Activated CD8-positive, alpha-beta T cell treated with anti-CD3 and anti-CD28 coated beads for 36 hours (primary cell): ENCODE measurements at regions of chr10 and their contacts with region 1.

Region 1: DNA sequence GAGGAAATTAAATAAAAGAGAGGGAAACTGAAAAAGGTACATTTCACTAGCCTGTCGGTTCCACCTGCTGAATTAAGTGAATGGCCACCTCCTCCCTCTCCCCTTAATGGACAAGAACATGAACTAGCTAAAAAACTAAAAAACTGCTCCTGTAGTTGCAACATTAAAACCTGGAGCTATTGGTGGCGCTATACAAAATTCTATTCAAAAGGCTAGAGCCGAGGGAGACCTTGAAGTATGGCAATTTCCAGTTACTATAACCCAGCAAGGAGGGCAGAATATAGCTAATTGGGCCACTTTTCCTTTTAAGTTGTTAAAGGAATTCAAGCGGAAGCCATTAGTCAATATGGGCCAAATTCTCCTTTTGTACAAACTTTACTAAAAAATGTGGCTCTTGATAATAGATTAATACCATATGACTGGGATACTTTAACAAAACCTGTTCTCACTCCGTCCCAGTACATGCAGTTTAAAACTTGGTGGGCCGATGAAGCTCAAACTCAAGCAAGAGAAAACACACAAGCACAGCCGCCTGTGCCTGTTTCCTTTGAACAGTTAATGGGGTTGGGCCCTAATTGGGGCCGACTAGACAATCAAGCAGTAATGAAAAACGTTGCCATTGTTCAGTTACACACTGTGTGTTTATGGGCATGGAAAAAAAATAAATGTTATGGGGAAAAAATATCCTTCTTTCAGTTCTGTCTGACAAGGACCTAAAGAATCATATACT is 6.5 kb upstream of the CHST3 start:
- DNase-seq: no peak
- ATAC-seq: no peak
- H3K4me3 Mint-ChIP-seq: no peak overlapping the region
- H3K27ac Mint-ChIP-seq: no peak overlapping the region
- H3K4me1 Mint-ChIP-seq: no peaks in the 10 kb centered on the region
- H3K27me3 Mint-ChIP-seq: peaks cover 12% of the 10 kb centered on the region
- CTCF ChIP-seq: no peak

Region 2: DNA sequence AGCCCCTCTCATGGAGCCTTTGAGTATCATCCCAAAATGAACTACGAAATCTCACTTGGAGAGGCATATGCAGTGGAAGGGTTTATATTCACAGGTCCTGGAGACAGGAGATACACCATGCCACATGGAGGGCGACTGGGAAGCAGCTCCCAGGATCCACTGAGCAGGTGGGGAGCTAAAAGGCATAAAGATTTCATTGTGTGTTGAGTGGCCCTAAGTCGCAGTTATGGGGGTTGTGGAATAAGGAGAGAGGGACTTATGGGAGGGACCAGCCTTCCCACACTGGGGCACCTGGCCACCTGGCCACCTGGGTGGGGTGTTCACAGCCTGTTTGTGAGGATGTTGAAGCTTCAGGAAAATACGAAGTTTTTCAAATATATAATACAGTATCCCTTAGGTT is 30.6 kb before region 1 on chr10:
- CTCF ChIA-PET with region 1: no interaction called
- POLR2A ChIA-PET with region 1: no interaction called
- intact Hi-C with region 1: no loop called
- DNase-seq: no peak
- ATAC-seq: no peak
- H3K4me3 Mint-ChIP-seq: no peak overlapping the region
- H3K27ac Mint-ChIP-seq: no peak overlapping the region
- H3K4me1 Mint-ChIP-seq: peaks cover 2% of the 10 kb centered on the region
- H3K27me3 Mint-ChIP-seq: no peaks in the 10 kb centered on the region
- CTCF ChIP-seq: no peak

Region 3: GRCh38 chr10:71945819-71946474 is 11.8 kb before region 1 on chr10:
- CTCF ChIA-PET with region 1: interaction called, 10 read pairs
- POLR2A ChIA-PET with region 1: no interaction called
- intact Hi-C with region 1: no loop called
- DNase-seq: no peak
- ATAC-seq: no peak
- H3K4me3 Mint-ChIP-seq: no peak overlapping the region
- H3K27ac Mint-ChIP-seq: no peak overlapping the region
- H3K4me1 Mint-ChIP-seq: no peaks in the 10 kb centered on the region
- H3K27me3 Mint-ChIP-seq: no peaks in the 10 kb centered on the region
- CTCF ChIP-seq: no peak

Region 4: DNA sequence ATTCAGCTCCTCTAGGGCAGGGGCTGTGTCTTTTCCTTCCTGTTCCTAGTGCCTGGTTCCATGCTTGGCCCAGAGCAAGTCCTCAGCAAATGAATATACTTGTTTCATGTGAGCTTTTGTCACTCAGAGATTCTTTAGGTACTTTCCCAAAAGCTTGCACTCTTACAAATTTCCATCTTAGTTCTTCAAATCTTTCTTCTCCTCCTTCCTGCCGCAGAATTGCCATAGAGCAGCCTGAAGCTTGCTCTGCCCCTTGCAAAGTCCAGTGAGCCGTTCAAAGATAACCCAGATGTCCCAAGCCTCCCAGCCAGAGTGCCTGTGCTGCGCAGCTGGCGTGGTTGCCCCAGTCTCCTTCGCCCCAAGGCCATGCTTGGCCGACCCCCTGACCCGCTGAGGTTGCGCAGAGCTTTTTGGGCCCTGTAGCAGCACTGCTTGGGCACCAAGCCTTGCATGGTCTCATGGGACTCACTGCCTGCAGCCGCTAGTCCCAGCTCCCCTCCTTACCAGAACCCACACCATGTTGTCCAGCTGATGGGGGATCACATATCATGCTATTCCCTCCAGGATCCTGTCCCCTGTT is 27.2 kb after region 1 on chr10:
- CTCF ChIA-PET with region 1: interaction called, 12 read pairs
- POLR2A ChIA-PET with region 1: no interaction called
- intact Hi-C with region 1: no loop called
- DNase-seq: no peak
- ATAC-seq: no peak
- H3K4me3 Mint-ChIP-seq: no peak overlapping the region
- H3K27ac Mint-ChIP-seq: no peak overlapping the region
- H3K4me1 Mint-ChIP-seq: peaks cover 17% of the 10 kb centered on the region
- H3K27me3 Mint-ChIP-seq: peaks cover 4% of the 10 kb centered on the region
- CTCF ChIP-seq: no peak

Region 5: DNA sequence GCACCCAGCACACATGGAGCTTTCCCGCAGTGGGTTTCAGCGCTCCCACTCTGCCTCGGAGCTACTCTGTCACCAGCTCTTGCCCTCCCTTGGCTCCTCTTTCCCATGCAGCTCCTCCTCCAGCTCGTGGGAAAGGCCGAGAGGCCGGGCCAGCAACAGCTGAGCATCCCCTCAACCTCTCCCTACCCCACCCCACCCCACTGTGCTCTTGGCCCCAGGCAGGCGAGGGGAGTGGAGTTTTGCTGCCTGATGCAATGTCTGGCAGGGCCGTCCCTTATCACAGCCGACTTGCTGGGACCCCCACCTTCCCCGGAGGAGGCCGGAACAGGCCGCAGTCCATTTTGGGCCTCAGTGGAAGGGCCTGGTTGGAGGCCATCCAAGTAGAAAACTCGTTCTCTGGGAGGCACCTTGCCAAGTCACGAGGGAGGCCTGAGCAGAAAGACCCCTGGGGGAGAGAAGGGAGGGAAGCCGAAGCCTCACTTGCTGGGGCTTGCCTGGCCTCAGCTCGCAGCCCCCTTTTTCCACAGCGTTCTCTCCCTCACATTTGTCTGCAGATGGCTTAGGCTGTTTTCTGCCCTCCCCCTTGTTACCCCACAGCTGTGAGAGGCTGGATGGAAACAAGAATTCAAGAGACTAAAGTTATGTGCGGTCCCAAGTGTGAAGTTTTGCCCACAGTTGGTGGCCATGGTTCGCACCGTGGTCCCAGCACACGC is 41.8 kb after region 1 on chr10:
- CTCF ChIA-PET with region 1: no interaction called
- POLR2A ChIA-PET with region 1: no interaction called
- intact Hi-C with region 1: no loop called
- DNase-seq: no peak
- ATAC-seq: no peak
- H3K4me3 Mint-ChIP-seq: no peak overlapping the region
- H3K27ac Mint-ChIP-seq: no peak overlapping the region
- H3K4me1 Mint-ChIP-seq: no peaks in the 10 kb centered on the region
- H3K27me3 Mint-ChIP-seq: no peaks in the 10 kb centered on the region
- CTCF ChIP-seq: no peak

Region 6: DNA sequence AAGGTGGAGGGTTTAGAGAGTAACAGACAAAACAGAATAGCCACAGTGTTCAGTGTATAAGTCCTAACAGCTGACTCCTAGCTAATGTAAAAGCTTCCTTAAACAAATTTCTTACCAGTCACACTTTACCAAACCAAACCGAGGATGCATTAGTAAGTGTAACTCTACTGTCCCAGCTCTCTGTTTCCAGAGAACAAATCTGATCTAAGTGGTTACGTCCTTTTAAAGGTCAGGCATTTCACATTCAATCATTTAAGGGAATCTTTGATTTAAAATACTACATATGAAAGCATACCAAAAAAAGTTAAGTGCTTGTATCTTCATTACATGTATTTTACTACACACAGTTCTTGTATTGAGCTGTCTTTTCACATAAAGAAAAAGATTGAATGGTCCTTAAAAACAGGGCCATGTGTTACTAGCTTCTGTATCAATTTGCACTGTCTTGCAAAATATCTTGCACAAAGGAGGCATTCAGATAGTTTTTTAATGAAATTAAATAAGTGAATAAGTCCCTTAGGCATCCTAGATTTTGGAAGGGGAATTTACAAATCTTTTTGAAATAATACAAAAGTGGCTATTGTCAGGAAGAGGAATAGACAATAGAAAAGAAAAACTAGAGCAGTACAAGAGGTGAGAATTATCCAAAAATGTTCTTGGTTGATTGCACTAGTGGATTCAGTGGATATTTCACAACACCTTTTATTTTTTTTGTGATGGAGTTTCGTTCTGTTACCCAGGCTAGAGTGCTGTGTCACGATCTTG is 189.0 kb after region 1 on chr10:
- CTCF ChIA-PET with region 1: no interaction called
- POLR2A ChIA-PET with region 1: no interaction called
- intact Hi-C with region 1: no loop called
- DNase-seq: no peak
- ATAC-seq: no peak
- H3K4me3 Mint-ChIP-seq: no peak overlapping the region
- H3K27ac Mint-ChIP-seq: no peak overlapping the region
- H3K4me1 Mint-ChIP-seq: peaks cover 22% of the 10 kb centered on the region
- H3K27me3 Mint-ChIP-seq: no peaks in the 10 kb centered on the region
- CTCF ChIP-seq: no peak